Esophagus muscularis mucosa (tissue), 4 donors: ENCODE measurements at regions of chr17 and their contacts with region 1.

Region 1: GRCh38 chr17:29771551-29771950 is 148.8 kb upstream of the CORO6 start:
- DNase-seq: no peak
- H3K4me3 ChIP-seq: no peak overlapping the region
- H3K27ac ChIP-seq: no peak overlapping the region
- H3K4me1 ChIP-seq: no peaks in the 10 kb centered on the region
- H3K27me3 ChIP-seq: no peaks in the 10 kb centered on the region
- CTCF ChIP-seq: no peak
- EP300 ChIP-seq: no peak
- POLR2A ChIP-seq: no peak

Region 2: DNA sequence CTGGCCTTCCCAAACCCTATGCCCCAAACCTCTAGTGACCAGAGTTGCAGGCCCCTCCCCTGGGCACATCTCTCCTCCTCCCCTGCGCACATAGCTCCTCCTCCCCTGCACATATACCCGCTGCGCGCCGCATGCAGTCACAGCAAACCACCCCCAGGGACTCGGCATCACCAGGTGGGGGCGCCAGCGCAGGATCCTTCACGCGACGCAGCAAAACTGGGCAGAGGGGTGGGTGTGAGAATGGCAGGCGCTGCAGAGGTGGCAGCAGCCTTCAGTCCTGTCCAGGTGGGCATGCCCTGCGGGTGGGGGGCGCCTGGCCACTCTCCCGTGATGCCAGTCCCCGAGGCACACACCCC is 154.4 kb before region 1 on chr17:
- intact Hi-C with region 1: loop called (anchors 10 kb)
- DNase-seq: no peak
- H3K4me3 ChIP-seq: peak overlapping the region; percentile 38 to 55 (median 47)
- H3K27ac ChIP-seq: peak overlapping the region in 1 of 4 donors; percentile 56
- H3K4me1 ChIP-seq: peaks cover 95 to 97% (median 96%) of the 10 kb centered on the region in 4 donors
- H3K27me3 ChIP-seq: peaks cover 0 to 6% (median 0%) of the 10 kb centered on the region in 4 donors
- CTCF ChIP-seq: peak; percentile 36 to 56 (median 40)
- EP300 ChIP-seq: no peak
- POLR2A ChIP-seq: no peak

Region 3: GRCh38 chr17:29855686-29856085 is 84.1 kb after region 1 on chr17:
- intact Hi-C with region 1: no loop called
- DNase-seq: no peak
- H3K4me3 ChIP-seq: no peak overlapping the region
- H3K27ac ChIP-seq: no peak overlapping the region
- H3K4me1 ChIP-seq: peaks cover 0 to 6% (median 0%) of the 10 kb centered on the region in 4 donors
- H3K27me3 ChIP-seq: no peaks in the 10 kb centered on the region
- CTCF ChIP-seq: no peak
- EP300 ChIP-seq: no peak
- POLR2A ChIP-seq: no peak